B cell (primary cell): ENCODE measurements at regions of chr7 and their contacts with region 1.

Region 1: GRCh38 chr7:149147072-149147751 is at the start of gene ZNF398:
- DNase-seq: peak; percentile 95
- ATAC-seq: peak; percentile 86
- H3K4me3 ChIP-seq: peak within 1 kb of the TSS; percentile 48 to 87 (median 79)
- H3K4me3 Mint-ChIP-seq: peak within 1 kb of the TSS; percentile 93
- H3K27ac ChIP-seq: peak within 1 kb of the TSS; percentile 82 to 83
- H3K27ac Mint-ChIP-seq: peak within 1 kb of the TSS; percentile 96
- H3K4me1 ChIP-seq: peaks cover 22 to 30% of the 10 kb centered on the region in 2 donors
- H3K4me1 Mint-ChIP-seq: peaks cover 32% of the 10 kb centered on the region
- H3K27me3 ChIP-seq: no peaks in the 10 kb centered on the region
- H3K27me3 Mint-ChIP-seq: no peaks in the 10 kb centered on the region
- CTCF ChIP-seq: peak; percentile 85
- total RNA-seq, gene ZNF398: 21.7 and 22.5 TPM in 2 replicates

Region 2: GRCh38 chr7:148698397-148699023 is 448.7 kb before region 1 on chr7 and contains the start of gene CUL1:
- CTCF ChIA-PET with region 1: no interaction called
- POLR2A ChIA-PET with region 1: no interaction called
- intact Hi-C with region 1: no loop called
- DNase-seq: peak; percentile 90
- ATAC-seq: peak; percentile 81
- H3K4me3 ChIP-seq: peak within 1 kb of the TSS; percentile 76 to 93 (median 84)
- H3K4me3 Mint-ChIP-seq: peak within 1 kb of the TSS; percentile 91
- H3K27ac ChIP-seq: peak within 1 kb of the TSS; percentile 69 to 91
- H3K27ac Mint-ChIP-seq: peak within 1 kb of the TSS; percentile 92
- H3K4me1 ChIP-seq: peaks cover 30 to 31% of the 10 kb centered on the region in 2 donors
- H3K4me1 Mint-ChIP-seq: peaks cover 46% of the 10 kb centered on the region
- H3K27me3 ChIP-seq: no peaks in the 10 kb centered on the region
- H3K27me3 Mint-ChIP-seq: no peaks in the 10 kb centered on the region
- CTCF ChIP-seq: no peak
- total RNA-seq, gene CUL1: 51.1 and 53.5 TPM in 2 replicates

Region 3: DNA sequence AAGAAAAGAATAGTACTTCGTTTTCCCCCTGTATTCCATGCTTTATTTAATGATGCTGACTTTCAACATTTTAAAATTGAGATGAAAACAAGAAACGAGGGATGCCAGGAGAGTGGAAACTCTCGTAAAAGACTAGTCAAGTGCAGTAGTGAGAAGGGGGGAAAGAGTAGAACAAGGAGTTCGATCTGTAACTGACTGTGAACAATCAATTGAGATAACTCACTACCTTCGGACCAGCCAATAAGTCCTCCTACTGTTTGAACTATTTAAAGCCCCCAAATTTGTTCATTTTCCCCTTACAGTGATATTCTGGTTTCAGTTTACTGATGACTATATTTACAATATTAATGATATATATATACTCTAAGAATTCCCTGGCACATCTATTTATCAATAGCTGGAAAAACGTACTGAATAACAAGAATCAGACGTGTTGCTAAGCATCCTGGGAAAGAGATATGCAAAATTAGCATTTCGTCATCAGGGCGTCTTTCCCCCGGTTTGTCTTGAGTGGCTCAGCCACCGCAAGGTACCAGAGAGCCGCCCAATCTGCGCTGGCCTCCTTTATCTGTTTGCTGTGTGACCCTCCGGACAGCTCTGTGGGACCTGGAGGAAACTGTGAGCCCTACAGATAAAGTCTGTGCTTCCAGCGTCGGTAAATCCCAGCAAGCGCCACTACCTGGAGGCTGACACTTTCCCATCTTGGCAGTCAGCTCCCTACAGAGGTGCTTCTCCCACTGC is 160.0 kb before region 1 on chr7:
- CTCF ChIA-PET with region 1: no interaction called
- POLR2A ChIA-PET with region 1: no interaction called
- intact Hi-C with region 1: loop called (anchors 2 kb)
- DNase-seq: peak; percentile 92
- ATAC-seq: peak; percentile 87
- H3K4me3 ChIP-seq: peak overlapping the region; percentile 78 to 98 (median 89)
- H3K4me3 Mint-ChIP-seq: peak overlapping the region; percentile 99
- H3K27ac ChIP-seq: peak overlapping the region; percentile 84 to 90
- H3K27ac Mint-ChIP-seq: peak overlapping the region; percentile 94
- H3K4me1 ChIP-seq: peaks cover 39 to 43% of the 10 kb centered on the region in 2 donors
- H3K4me1 Mint-ChIP-seq: peaks cover 49% of the 10 kb centered on the region
- H3K27me3 ChIP-seq: no peaks in the 10 kb centered on the region
- H3K27me3 Mint-ChIP-seq: no peaks in the 10 kb centered on the region
- CTCF ChIP-seq: no peak

Region 4: DNA sequence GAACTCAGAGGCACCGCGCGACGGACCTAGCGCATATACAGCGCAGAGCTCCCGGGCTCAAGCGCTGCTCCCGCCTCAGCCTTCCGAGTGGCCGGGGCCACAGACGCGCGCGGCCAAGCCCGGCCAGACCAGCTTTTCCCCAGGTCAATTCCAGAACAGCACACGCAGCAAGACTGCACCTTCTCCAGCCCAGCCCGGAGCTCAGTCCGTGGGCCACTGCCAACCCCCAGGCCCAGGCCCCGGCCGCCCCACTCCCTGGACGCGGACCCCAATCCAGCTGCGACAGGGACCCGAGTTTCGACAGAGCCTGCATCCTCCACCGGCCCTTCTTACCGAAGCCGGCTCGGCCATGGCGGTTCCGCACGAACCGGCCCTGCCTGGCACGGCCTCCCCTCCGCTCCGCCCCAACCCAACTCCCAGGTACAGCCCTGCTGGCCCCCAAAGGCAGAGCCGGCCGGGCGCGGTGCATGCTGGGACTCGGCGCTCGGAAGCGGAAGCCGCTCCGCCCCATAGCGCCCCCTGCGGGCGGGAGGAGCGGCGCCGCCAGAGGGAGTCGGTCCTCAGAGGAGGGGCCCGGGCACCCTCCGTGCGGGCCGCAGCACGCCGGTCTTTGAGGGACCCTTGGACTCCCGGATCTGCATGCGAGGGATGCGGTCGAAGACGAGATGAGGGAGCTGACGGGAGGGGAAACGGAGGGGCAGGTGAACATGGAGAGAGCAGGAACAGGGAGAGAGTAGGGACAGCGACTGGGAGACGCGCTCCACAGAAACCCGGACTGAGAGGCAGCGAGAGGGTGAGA is 21.1 kb before region 1 on chr7 and contains the start of gene ZNF425:
- CTCF ChIA-PET with region 1: interaction called, 70 read pairs
- POLR2A ChIA-PET with region 1: interaction called, 42 read pairs
- intact Hi-C with region 1: loop called (anchors 1 kb)
- DNase-seq: peak; percentile 95
- ATAC-seq: peak; percentile 84
- H3K4me3 ChIP-seq: peak within 1 kb of the TSS; percentile 64 to 98 (median 88)
- H3K4me3 Mint-ChIP-seq: peak within 1 kb of the TSS; percentile 97
- H3K27ac ChIP-seq: peak within 1 kb of the TSS; percentile 85 to 89
- H3K27ac Mint-ChIP-seq: peak within 1 kb of the TSS; percentile 99
- H3K4me1 ChIP-seq: peaks cover 12 to 14% of the 10 kb centered on the region in 2 donors
- H3K4me1 Mint-ChIP-seq: peaks cover 22% of the 10 kb centered on the region
- H3K27me3 ChIP-seq: no peaks in the 10 kb centered on the region
- H3K27me3 Mint-ChIP-seq: no peaks in the 10 kb centered on the region
- CTCF ChIP-seq: peak; percentile 89
- total RNA-seq, gene ZNF425: 2.8 and 3.3 TPM in 2 replicates

Region 5: DNA sequence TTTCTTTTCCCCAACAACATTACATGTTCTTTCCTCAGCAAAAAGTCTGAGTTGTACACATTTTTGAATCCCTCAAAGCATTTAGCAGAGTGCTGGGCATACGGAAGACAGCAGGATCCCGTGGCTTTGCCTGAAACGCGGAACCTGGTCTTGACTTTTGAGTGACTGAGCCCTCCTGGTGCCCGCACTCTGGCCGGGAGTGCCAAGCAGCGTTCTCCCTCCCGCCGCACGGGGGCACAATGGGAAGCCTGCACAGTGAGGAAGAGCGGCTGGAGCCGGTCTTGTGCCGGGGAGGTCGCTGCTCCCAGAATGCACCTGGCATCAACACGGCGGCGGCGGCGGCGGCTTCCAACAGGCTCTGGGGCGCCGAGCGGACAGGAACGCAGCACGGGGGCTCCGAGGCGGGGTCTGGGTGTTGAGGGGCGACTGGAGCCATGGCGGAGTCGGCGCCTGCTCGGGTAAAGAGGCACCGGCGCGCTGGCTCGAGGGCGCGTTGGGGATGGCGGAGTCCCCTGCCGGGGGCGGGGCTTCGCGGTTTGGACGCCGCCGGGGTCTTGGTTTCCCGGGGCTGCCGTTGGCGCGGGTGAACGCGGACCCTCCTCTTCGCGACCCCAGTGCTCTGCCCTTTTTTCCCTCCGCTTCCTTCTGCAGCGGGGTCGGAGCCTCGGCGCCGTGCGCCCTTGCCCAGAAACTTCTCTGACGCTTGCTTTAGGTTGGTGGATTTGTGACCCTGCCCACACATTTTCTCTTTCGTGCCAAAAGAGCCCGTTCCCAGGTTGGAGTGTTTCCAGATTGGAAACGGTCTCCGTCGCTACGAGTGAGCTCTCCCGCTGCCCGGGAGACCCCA is 92.4 kb after region 1 on chr7 and contains the start of gene ZNF212:
- CTCF ChIA-PET with region 1: interaction called, 5 read pairs
- POLR2A ChIA-PET with region 1: no interaction called
- intact Hi-C with region 1: loop called (anchors 1 kb)
- DNase-seq: peak; percentile 91
- ATAC-seq: peak; percentile 100
- H3K4me3 ChIP-seq: peak within 1 kb of the TSS; percentile 75 to 94 (median 84)
- H3K4me3 Mint-ChIP-seq: peak within 1 kb of the TSS; percentile 95
- H3K27ac ChIP-seq: peak within 1 kb of the TSS; percentile 33 to 73
- H3K27ac Mint-ChIP-seq: peak within 1 kb of the TSS; percentile 93
- H3K4me1 ChIP-seq: peaks cover 17 to 25% of the 10 kb centered on the region in 2 donors
- H3K4me1 Mint-ChIP-seq: peaks cover 28% of the 10 kb centered on the region
- H3K27me3 ChIP-seq: peaks cover 0 to 5% (median 0%) of the 10 kb centered on the region in 4 experiments
- H3K27me3 Mint-ChIP-seq: peaks cover 3% of the 10 kb centered on the region
- CTCF ChIP-seq: peak; percentile 84
- total RNA-seq, gene ZNF212: 22.5 and 25.7 TPM in 2 replicates

Region 6: DNA sequence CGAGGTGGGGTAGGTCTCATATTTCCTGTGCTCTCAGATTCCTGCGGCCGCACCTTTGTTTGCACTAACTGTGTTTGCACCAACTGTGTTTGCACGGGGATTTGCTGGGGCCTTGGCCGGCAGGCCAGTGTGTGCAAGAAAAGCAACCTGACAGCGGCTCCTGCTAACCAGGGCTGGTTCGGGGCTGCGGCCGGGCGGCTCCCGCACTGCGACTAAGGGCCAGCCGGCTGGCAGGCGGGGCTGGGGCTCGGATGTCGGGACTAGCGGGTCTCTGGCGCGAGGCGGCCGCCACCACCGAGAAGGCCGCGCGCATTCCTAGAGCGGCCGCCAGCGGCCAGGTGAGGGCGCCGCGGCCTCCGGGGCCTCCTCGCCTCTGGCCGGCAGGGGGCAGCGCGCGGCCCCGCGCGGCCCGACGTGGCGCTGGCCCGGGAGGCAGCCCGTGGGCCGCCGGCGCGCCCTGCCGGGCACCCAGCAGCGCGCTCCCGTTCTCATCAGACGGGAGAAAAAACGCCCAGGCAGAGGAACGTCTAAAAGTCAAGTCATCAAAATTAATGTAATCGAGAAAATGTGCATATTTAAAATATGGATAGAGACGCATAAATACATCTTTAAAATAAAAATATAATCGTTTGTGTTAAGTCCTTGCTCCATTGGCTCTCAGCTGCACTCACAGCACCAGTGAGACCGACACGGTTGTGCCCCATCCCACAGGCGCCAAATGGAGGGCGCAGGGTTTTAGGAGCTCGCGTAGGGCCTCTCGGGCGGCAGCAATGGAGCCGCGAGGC is 275.1 kb after region 1 on chr7:
- CTCF ChIA-PET with region 1: interaction called, 10 read pairs
- POLR2A ChIA-PET with region 1: no interaction called
- intact Hi-C with region 1: loop called (anchors 1 kb)
- DNase-seq: peak; percentile 89
- ATAC-seq: peak; percentile 98
- H3K4me3 ChIP-seq: peak overlapping the region; percentile 58 to 71 (median 60)
- H3K4me3 Mint-ChIP-seq: peak overlapping the region; percentile 83
- H3K27ac ChIP-seq: peak overlapping the region; percentile 20 to 73
- H3K27ac Mint-ChIP-seq: peak overlapping the region; percentile 81
- H3K4me1 ChIP-seq: peaks cover 10 to 12% of the 10 kb centered on the region in 2 donors
- H3K4me1 Mint-ChIP-seq: peaks cover 8% of the 10 kb centered on the region
- H3K27me3 ChIP-seq: no peaks in the 10 kb centered on the region
- H3K27me3 Mint-ChIP-seq: no peaks in the 10 kb centered on the region
- CTCF ChIP-seq: peak; percentile 63

Region 7: GRCh38 chr7:149497456-149498261 is 350.4 kb after region 1 on chr7 and contains the start of gene ZNF746:
- CTCF ChIA-PET with region 1: no interaction called
- POLR2A ChIA-PET with region 1: no interaction called
- intact Hi-C with region 1: loop called (anchors 5 kb)
- DNase-seq: peak; percentile 89
- ATAC-seq: peak; percentile 96
- H3K4me3 ChIP-seq: peak within 1 kb of the TSS; percentile 27 to 87 (median 60)
- H3K4me3 Mint-ChIP-seq: peak within 1 kb of the TSS; percentile 93
- H3K27ac ChIP-seq: peak within 1 kb of the TSS in 1 of 2 donors; percentile 78
- H3K27ac Mint-ChIP-seq: peak within 1 kb of the TSS; percentile 92
- H3K4me1 ChIP-seq: peaks cover 12 to 19% of the 10 kb centered on the region in 2 donors
- H3K4me1 Mint-ChIP-seq: peaks cover 23% of the 10 kb centered on the region
- H3K27me3 ChIP-seq: no peaks in the 10 kb centered on the region
- H3K27me3 Mint-ChIP-seq: no peaks in the 10 kb centered on the region
- CTCF ChIP-seq: peak; percentile 43
- total RNA-seq, gene ZNF746: 30.4 and 32.2 TPM in 2 replicates

Region 8: GRCh38 chr7:149714050-149714909 is 567.1 kb after region 1 on chr7:
- CTCF ChIA-PET with region 1: no interaction called
- POLR2A ChIA-PET with region 1: no interaction called
- intact Hi-C with region 1: loop called (anchors 10 kb)
- DNase-seq: peak; percentile 94
- ATAC-seq: peak; percentile 93
- H3K4me3 ChIP-seq: peak overlapping the region in 4 of 5 experiments; percentile 62 to 83 (median 68)
- H3K4me3 Mint-ChIP-seq: peak overlapping the region; percentile 87
- H3K27ac ChIP-seq: no peak overlapping the region
- H3K27ac Mint-ChIP-seq: peak overlapping the region; percentile 78
- H3K4me1 ChIP-seq: peaks cover 10 to 21% of the 10 kb centered on the region in 2 donors
- H3K4me1 Mint-ChIP-seq: peaks cover 22% of the 10 kb centered on the region
- H3K27me3 ChIP-seq: no peaks in the 10 kb centered on the region
- H3K27me3 Mint-ChIP-seq: no peaks in the 10 kb centered on the region
- CTCF ChIP-seq: no peak